ENCODE measurements at regions of chr11 and their contacts with region 1.

Region 1: GRCh38 chr11:93234602-93235207 is 36.9 kb upstream of the SLC36A4 start:
- DNase-seq: peak; percentile 53 to 63 (median 59)
- H3K4me3 ChIP-seq: no peak overlapping the region
- H3K4me3 Mint-ChIP-seq: no peak overlapping the region
- H3K27ac ChIP-seq: no peak overlapping the region
- H3K27ac Mint-ChIP-seq: no peak overlapping the region
- H3K4me1 ChIP-seq: no peaks in the 10 kb centered on the region
- H3K4me1 Mint-ChIP-seq: no peaks in the 10 kb centered on the region
- H3K27me3 ChIP-seq: no peaks in the 10 kb centered on the region
- H3K27me3 Mint-ChIP-seq: peaks cover 9 to 10% of the 10 kb centered on the region in 2 donors

Region 2: GRCh38 chr11:93084727-93085505 is 149.8 kb before region 1 on chr11:
- CTCF ChIA-PET with region 1: no interaction called
- POLR2A ChIA-PET with region 1: no interaction called
- intact Hi-C with region 1: no loop called
- DNase-seq: no peak
- H3K4me3 ChIP-seq: no peak overlapping the region
- H3K4me3 Mint-ChIP-seq: no peak overlapping the region
- H3K27ac ChIP-seq: no peak overlapping the region
- H3K27ac Mint-ChIP-seq: no peak overlapping the region
- H3K4me1 ChIP-seq: no peaks in the 10 kb centered on the region
- H3K4me1 Mint-ChIP-seq: no peaks in the 10 kb centered on the region
- H3K27me3 ChIP-seq: no peaks in the 10 kb centered on the region
- H3K27me3 Mint-ChIP-seq: peaks cover 0 to 4% of the 10 kb centered on the region in 2 donors

Region 3: DNA sequence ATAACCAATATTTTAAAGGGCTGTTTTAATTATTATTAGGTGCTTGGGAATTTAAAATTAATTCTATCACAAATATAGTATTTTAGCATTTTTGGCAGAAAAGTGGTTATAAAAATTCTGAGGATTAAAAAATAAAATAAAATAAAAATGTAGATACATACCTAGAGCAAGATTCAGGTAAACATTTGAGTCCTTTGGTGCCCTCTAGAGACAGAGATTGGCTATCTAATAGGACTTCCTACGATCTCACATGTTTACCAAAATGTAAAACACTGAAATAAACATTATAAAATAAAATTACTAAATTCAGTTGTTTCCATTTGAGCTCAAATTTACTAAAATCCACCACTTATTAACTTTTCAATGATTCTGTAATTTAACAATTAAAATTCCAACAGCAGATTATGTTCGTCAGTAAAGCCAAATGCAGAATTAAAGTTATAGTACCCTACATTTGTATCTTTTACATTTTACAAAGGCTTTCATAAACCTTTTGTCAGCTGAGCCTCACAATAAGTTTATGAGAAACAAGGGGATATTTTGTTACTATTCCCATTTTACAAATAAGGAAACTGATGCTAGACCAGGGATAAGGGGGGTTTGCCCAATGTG is 64.6 kb before region 1 on chr11:
- CTCF ChIA-PET with region 1: no interaction called
- POLR2A ChIA-PET with region 1: no interaction called
- intact Hi-C with region 1: no loop called
- DNase-seq: no peak
- H3K4me3 ChIP-seq: no peak overlapping the region
- H3K4me3 Mint-ChIP-seq: no peak overlapping the region
- H3K27ac ChIP-seq: no peak overlapping the region
- H3K27ac Mint-ChIP-seq: no peak overlapping the region
- H3K4me1 ChIP-seq: peaks cover 9% of the 10 kb centered on the region
- H3K4me1 Mint-ChIP-seq: peaks cover 6 to 18% (median 8%) of the 10 kb centered on the region in 4 donors
- H3K27me3 ChIP-seq: no peaks in the 10 kb centered on the region
- H3K27me3 Mint-ChIP-seq: no peaks in the 10 kb centered on the region

Region 4: GRCh38 chr11:93248602-93249001 is 13.9 kb after region 1 on chr11:
- CTCF ChIA-PET with region 1: interaction called, 11 read pairs
- POLR2A ChIA-PET with region 1: no interaction called
- intact Hi-C with region 1: no loop called
- DNase-seq: no peak
- H3K4me3 ChIP-seq: no peak overlapping the region
- H3K4me3 Mint-ChIP-seq: no peak overlapping the region
- H3K27ac ChIP-seq: no peak overlapping the region
- H3K27ac Mint-ChIP-seq: no peak overlapping the region
- H3K4me1 ChIP-seq: no peaks in the 10 kb centered on the region
- H3K4me1 Mint-ChIP-seq: no peaks in the 10 kb centered on the region
- H3K27me3 ChIP-seq: no peaks in the 10 kb centered on the region
- H3K27me3 Mint-ChIP-seq: peaks cover 10 to 17% of the 10 kb centered on the region in 2 donors

Region 5: DNA sequence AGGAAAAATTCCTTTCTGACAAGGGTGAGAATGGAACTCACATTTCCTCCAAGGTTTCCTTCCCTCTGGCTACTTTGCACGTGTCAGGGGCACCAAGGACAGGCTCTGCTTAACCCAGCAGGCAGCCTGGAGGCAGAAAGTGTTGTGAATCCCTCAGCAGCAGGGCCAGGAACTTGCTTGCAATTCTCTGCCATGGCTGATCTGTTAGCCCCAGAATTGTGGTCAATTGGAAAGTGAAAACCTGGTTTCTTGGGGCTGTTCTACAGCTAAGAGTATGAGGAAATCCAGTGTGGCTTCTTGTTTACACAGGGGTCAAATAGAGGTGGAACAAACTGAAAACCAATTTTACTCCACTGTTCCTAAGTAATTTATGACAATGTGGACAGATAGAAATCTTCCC is 388.5 kb after region 1 on chr11:
- CTCF ChIA-PET with region 1: interaction called, 11 read pairs
- POLR2A ChIA-PET with region 1: no interaction called
- intact Hi-C with region 1: no loop called
- DNase-seq: no peak
- H3K4me3 ChIP-seq: no peak overlapping the region
- H3K4me3 Mint-ChIP-seq: no peak overlapping the region
- H3K27ac ChIP-seq: no peak overlapping the region
- H3K27ac Mint-ChIP-seq: no peak overlapping the region
- H3K4me1 ChIP-seq: no peaks in the 10 kb centered on the region
- H3K4me1 Mint-ChIP-seq: no peaks in the 10 kb centered on the region
- H3K27me3 ChIP-seq: no peaks in the 10 kb centered on the region
- H3K27me3 Mint-ChIP-seq: peaks cover 3 to 21% of the 10 kb centered on the region in 2 donors

Region 6: GRCh38 chr11:93652161-93652597 is 417.5 kb after region 1 on chr11:
- CTCF ChIA-PET with region 1: interaction called, 79 read pairs
- POLR2A ChIA-PET with region 1: no interaction called
- intact Hi-C with region 1: loop called (anchors 1 kb)
- DNase-seq: peak in 4 of 5 donors; percentile 42 to 48 (median 46)
- H3K4me3 ChIP-seq: no peak overlapping the region
- H3K4me3 Mint-ChIP-seq: no peak overlapping the region
- H3K27ac ChIP-seq: no peak overlapping the region
- H3K27ac Mint-ChIP-seq: no peak overlapping the region
- H3K4me1 ChIP-seq: no peaks in the 10 kb centered on the region
- H3K4me1 Mint-ChIP-seq: peaks cover 0 to 7% (median 6%) of the 10 kb centered on the region in 4 donors
- H3K27me3 ChIP-seq: no peaks in the 10 kb centered on the region
- H3K27me3 Mint-ChIP-seq: peaks cover 3 to 11% of the 10 kb centered on the region in 2 donors

Region 7: DNA sequence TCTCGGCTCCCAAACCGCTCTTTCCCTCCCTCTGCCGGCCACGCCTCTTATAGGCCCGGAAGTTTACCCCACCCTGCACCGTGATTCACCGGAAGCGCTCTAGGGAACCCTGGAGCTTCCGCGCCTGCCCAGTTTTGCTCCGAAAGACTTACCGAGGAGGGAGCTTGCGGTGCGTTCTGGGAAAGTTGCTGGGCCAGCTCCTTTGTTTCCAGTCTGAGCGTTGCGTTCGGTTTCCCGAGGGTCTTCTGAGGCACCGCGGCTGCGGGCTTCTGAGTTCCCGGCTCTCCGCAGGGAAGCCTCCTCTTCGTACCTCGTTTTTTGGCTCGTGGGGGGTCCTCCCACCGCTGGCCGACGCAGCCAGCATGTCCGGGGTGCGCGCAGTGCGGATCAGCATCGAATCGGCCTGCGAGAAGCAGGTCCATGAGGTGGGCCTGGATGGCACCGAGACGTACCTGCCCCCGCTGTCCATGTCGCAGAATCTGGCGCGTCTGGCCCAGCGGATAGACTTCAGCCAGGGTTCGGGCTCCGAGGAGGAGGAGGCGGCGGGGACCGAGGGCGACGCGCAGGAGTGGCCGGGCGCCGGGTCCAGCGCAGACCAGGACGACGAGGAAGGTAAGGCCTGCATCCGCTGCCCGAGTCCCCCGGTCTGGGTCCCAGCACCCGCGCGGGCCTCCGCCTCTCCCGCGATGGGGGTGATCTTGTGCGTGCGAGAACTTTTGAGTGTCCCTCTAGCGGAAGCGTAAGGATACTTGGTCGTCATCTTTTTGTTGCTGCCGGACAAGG is 549.6 kb after region 1 on chr11 and contains the start of gene MED17:
- CTCF ChIA-PET with region 1: no interaction called
- POLR2A ChIA-PET with region 1: no interaction called
- intact Hi-C with region 1: loop called (anchors 10 kb)
- DNase-seq: peak; percentile 84 to 91 (median 85)
- H3K4me3 ChIP-seq: peak within 1 kb of the TSS; percentile 93 to 94
- H3K4me3 Mint-ChIP-seq: peak within 1 kb of the TSS; percentile 93 to 100 (median 98)
- H3K27ac ChIP-seq: peak within 1 kb of the TSS; percentile 84
- H3K27ac Mint-ChIP-seq: peak within 1 kb of the TSS; percentile 68 to 99 (median 97)
- H3K4me1 ChIP-seq: peaks cover 37% of the 10 kb centered on the region
- H3K4me1 Mint-ChIP-seq: peaks cover 27 to 45% (median 36%) of the 10 kb centered on the region in 4 donors
- H3K27me3 ChIP-seq: no peaks in the 10 kb centered on the region
- H3K27me3 Mint-ChIP-seq: no peaks in the 10 kb centered on the region
- total RNA-seq, gene MED17: 73.2 to 78.5 TPM